ENCODE measurements at regions of chr12 and their contacts with region 1.

Region 1: DNA sequence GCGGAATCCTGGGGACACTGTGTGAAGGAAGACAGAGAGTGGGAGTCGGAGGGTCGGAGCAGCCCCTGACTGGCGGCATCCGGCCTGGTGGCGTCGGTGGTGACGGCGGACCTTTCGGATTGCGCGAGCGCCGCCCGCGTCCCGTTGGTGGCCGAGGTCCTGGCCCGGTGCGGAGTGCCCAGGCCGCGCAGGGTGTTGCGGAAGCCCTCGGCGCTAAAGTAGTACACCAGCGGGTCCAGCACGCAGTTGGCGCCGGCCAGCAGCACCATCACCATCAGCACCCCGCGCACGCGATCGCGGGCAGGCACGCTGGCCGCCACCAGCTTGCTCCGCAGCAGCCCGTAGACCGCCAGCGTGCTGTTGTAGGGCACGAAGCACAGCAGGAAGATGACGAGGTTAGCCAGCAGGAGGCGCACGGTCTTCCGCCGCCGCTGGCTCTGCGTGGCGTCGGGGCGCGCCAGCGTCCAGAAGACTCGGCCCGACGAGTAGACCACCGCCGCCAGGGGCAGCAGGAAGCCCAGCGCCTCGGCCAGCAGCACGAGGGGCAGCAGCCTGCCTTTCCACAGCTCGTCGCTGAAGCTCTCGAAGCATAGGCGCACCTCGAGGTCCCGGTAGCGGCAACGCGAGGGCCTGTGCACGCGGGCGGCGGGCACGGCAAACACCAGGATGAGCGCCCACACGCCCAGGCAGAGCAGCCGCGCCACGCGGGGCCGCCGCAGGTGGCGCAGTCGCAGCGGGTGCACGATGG is 13.1 kb upstream of the CHD4 start:
- DNase-seq: peak; percentile 67
- H3K4me3 Mint-ChIP-seq: peak overlapping the region; percentile 30
- H3K27ac Mint-ChIP-seq: no peak overlapping the region
- H3K4me1 Mint-ChIP-seq: peaks cover 8% of the 10 kb centered on the region
- H3K27me3 Mint-ChIP-seq: no peaks in the 10 kb centered on the region

Region 2: GRCh38 chr12:6632026-6632983 is 12.0 kb after region 1 on chr12:
- CTCF ChIA-PET with region 1: interaction called, 28 read pairs
- intact Hi-C with region 1: no loop called
- DNase-seq: peak; percentile 77
- H3K4me3 Mint-ChIP-seq: peak overlapping the region; percentile 74
- H3K27ac Mint-ChIP-seq: peak overlapping the region; percentile 97
- H3K4me1 Mint-ChIP-seq: peaks cover 62% of the 10 kb centered on the region
- H3K27me3 Mint-ChIP-seq: no peaks in the 10 kb centered on the region

Region 3: GRCh38 chr12:6644903-6645302 is 24.6 kb after region 1 on chr12:
- CTCF ChIA-PET with region 1: interaction called, 30 read pairs
- intact Hi-C with region 1: loop called (anchors 1 kb)
- DNase-seq: peak; percentile 48
- H3K4me3 Mint-ChIP-seq: no peak overlapping the region
- H3K27ac Mint-ChIP-seq: no peak overlapping the region
- H3K4me1 Mint-ChIP-seq: peaks cover 6% of the 10 kb centered on the region
- H3K27me3 Mint-ChIP-seq: no peaks in the 10 kb centered on the region

Region 4: GRCh38 chr12:6697584-6698351 is 77.5 kb after region 1 on chr12:
- CTCF ChIA-PET with region 1: interaction called, 21 read pairs
- intact Hi-C with region 1: no loop called
- DNase-seq: peak; percentile 50
- H3K4me3 Mint-ChIP-seq: no peak overlapping the region
- H3K27ac Mint-ChIP-seq: no peak overlapping the region
- H3K4me1 Mint-ChIP-seq: peaks cover 8% of the 10 kb centered on the region
- H3K27me3 Mint-ChIP-seq: peaks cover 27% of the 10 kb centered on the region

Measured in activated naive CD4-positive, alpha-beta T cell treated with anti-CD3 and anti-CD28 coated beads for 36 hours (primary cell).